HCT116 (cell line): ENCODE measurements at regions of chr1 and their contacts with region 1.

Region 1: GRCh38 chr1:112715264-112716053 is at the start of gene PPM1J:
- DNase-seq: peak; percentile 89
- ATAC-seq: peak; percentile 82
- H3K4me3 ChIP-seq: peak within 1 kb of the TSS; percentile 58 to 75
- H3K27ac ChIP-seq: peak within 1 kb of the TSS; percentile 34; the same call in 1 of the 2 replicates
- H3K4me1 ChIP-seq: peaks cover 18 to 39% of the 10 kb centered on the region in 2 experiments
- H3K27me3 ChIP-seq: no peaks in the 10 kb centered on the region
- CTCF ChIP-seq: no peak
- POLR2A ChIP-seq: no peak
- RAD21 ChIP-seq: no peak
- total RNA-seq, gene PPM1J: 7.5 TPM

Region 2: GRCh38 chr1:112729909-112730308 is 14.4 kb after region 1 on chr1:
- CTCF ChIA-PET with region 1: interaction called, 11 read pairs
- POLR2A ChIA-PET with region 1: no interaction called
- RAD21 ChIA-PET with region 1: no interaction called
- intact Hi-C with region 1: no loop called
- DNase-seq: no peak
- ATAC-seq: no peak
- H3K4me3 ChIP-seq: no peak overlapping the region
- H3K27ac ChIP-seq: no peak overlapping the region
- H3K4me1 ChIP-seq: peaks cover 0 to 7% of the 10 kb centered on the region in 2 experiments; a peak in 2 of 4 replicates
- H3K27me3 ChIP-seq: no peaks in the 10 kb centered on the region
- CTCF ChIP-seq: no peak
- POLR2A ChIP-seq: no peak
- RAD21 ChIP-seq: no peak

Region 3: DNA sequence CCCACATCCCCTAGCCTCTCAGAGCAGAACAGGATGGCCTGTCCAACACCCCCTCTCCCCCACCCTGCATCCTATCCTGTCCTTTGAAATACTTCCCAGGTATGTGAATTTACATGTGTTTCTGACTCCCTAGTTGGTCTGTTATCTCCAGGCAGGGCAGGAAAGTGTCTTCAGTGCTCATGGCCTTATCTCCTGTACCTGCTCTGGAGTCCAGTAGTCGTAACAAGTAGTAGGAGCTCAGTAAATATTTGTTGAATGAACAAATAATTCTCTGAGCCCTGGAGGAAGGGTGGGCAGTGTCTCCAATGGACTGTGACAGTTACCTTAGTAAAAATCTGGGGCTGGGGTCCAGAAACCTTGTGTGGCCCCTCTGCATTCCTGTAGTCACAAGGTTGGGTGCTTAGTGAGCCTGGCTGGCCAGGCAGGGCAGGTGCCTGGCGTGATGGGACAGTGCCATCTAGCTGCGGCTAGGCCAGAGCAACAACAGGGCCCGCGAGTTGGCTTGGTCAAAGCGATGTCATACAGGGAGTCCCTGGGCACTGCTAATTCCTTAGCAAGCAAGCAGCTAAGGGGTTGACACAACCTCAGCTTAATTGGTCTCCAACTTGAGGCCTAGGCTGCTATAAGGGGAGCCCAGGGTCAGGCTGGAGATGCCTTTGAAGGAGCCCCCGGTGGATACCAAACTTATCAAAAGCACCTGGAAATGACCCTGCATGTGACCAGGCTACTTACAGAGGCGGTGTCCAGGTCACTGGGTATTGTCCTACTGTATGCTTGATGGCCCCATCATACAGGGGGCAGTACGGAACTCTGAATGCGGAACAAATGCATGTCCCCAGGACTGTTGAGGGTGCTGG is 88.7 kb after region 1 on chr1:
- CTCF ChIA-PET with region 1: interaction called, 114 read pairs
- POLR2A ChIA-PET with region 1: interaction called, 16 read pairs
- RAD21 ChIA-PET with region 1: interaction called, 13 to 16 read pairs
- intact Hi-C with region 1: loop called (anchors 1 kb)
- DNase-seq: peak; percentile 61
- ATAC-seq: peak; percentile 97
- H3K4me3 ChIP-seq: no peak overlapping the region
- H3K27ac ChIP-seq: no peak overlapping the region
- H3K4me1 ChIP-seq: no peaks in the 10 kb centered on the region
- H3K27me3 ChIP-seq: no peaks in the 10 kb centered on the region
- CTCF ChIP-seq: peak; percentile 93 to 96 (median 93)
- POLR2A ChIP-seq: no peak
- RAD21 ChIP-seq: peak; percentile 100

Region 4: GRCh38 chr1:112882271-112882744 is 166.8 kb after region 1 on chr1:
- CTCF ChIA-PET with region 1: interaction called, 3 read pairs
- POLR2A ChIA-PET with region 1: no interaction called
- RAD21 ChIA-PET with region 1: no interaction called
- intact Hi-C with region 1: loop called (anchors 5 kb)
- DNase-seq: no peak
- ATAC-seq: no peak
- H3K4me3 ChIP-seq: no peak overlapping the region
- H3K27ac ChIP-seq: no peak overlapping the region
- H3K4me1 ChIP-seq: no peaks in the 10 kb centered on the region
- H3K27me3 ChIP-seq: no peaks in the 10 kb centered on the region
- CTCF ChIP-seq: no peak
- POLR2A ChIP-seq: no peak
- RAD21 ChIP-seq: no peak

Region 5: DNA sequence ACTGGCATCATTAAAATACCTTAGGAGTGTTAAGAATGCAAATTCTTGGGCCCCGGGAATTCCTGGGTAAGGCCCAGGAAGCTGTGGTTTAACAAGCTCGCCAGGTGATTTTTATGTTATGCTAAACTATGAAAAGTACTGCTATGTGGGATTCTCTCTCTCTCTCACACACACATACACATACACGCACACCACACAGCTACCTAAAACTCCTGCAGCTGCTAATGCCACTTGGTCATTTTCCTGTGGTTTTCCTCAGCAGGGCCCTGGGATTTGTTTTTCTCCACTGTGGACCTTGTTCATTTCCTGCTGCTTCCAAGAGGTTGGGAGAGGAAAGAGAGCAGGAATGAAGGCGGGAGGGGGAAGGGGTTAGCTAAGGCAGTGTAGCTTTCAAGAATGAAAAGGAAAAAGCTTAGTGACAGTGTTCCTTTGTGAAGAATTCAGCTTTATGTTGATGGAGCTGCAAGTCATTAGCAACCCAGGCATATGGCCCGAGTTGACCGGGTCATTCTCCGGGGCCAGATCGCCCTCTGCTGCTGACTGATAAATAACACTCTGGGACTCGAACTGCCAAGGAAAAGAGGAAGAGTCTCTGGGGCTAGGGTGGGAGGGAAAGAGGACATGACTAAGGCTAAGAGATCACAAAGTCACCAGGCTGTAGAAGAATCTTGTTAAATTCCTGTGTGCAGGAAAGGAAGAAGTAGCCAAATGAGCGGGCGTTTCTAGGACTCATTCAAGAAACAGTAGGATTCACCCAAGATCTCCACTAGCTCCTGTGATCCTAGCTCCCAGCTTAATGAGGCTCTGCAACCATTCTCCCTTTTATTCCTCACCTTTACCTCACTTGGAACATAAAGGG is 327.1 kb after region 1 on chr1:
- CTCF ChIA-PET with region 1: interaction called, 26 read pairs
- POLR2A ChIA-PET with region 1: no interaction called
- RAD21 ChIA-PET with region 1: interaction called in 1 of 2 experiments, 4 read pairs
- intact Hi-C with region 1: loop called (anchors 1 kb)
- DNase-seq: peak; percentile 36
- ATAC-seq: peak; percentile 97
- H3K4me3 ChIP-seq: no peak overlapping the region
- H3K27ac ChIP-seq: peak overlapping the region; percentile 2; the same call in 1 of the 2 replicates
- H3K4me1 ChIP-seq: peaks cover 9 to 17% of the 10 kb centered on the region in 2 experiments; a peak in 3 of 4 replicates
- H3K27me3 ChIP-seq: no peaks in the 10 kb centered on the region
- CTCF ChIP-seq: peak; percentile 51 to 88 (median 67); a peak in 5 of 6 replicates
- POLR2A ChIP-seq: no peak
- RAD21 ChIP-seq: peak; percentile 94